ENCODE measurements at regions of chr2 and their contacts with region 1.

Region 1: GRCh38 chr2:138948070-138948539 is 167.9 kb upstream of the NXPH2 start:
- DNase-seq: peak; percentile 99
- ATAC-seq: peak; percentile 73
- H3K4me3 ChIP-seq: no peak overlapping the region
- H3K27ac ChIP-seq: peak overlapping the region; percentile 97
- H3K4me1 ChIP-seq: peaks cover 44% of the 10 kb centered on the region
- H3K27me3 ChIP-seq: no peaks in the 10 kb centered on the region
- CTCF ChIP-seq: no peak

Region 2: GRCh38 chr2:138964418-138964817 is 16.3 kb after region 1 on chr2:
- CTCF ChIA-PET with region 1: no interaction called
- POLR2A ChIA-PET with region 1: interaction called, 5 read pairs
- intact Hi-C with region 1: loop called (anchors 1 kb)
- DNase-seq: peak; percentile 94
- ATAC-seq: peak; percentile 93
- H3K4me3 ChIP-seq: no peak overlapping the region
- H3K27ac ChIP-seq: peak overlapping the region; percentile 94
- H3K4me1 ChIP-seq: peaks cover 21% of the 10 kb centered on the region
- H3K27me3 ChIP-seq: no peaks in the 10 kb centered on the region
- CTCF ChIP-seq: no peak

Region 3: DNA sequence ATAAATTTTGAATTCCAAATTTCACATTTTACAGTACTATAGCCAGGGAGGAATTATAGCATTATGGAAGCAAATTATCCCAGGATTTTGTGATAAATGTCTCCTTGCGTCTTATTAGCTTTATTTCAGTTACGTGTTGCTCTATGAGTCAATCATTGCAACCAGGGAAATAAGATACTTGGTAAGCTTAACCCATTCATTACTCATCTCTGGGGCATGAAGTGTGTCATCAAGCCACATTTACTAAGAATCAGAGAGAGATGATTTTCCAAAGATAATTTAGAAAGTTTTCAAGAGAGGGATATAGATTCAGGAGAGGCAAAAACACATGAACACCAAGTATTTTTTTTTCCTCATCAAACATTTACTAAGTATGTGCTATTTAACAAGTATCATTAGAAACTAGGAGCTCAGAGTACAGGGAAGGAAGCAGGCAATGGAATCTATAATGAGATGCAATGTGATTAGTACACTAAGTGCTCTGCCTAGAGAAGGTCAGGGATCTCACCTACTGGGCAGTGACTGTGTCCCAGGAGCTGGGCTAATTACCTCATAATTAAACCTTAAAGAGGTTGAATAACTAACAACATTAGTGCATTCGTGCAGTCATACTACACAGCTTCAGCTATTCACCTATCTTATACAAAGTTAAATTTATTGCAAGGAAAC is 49.9 kb after region 1 on chr2:
- CTCF ChIA-PET with region 1: no interaction called
- POLR2A ChIA-PET with region 1: no interaction called
- intact Hi-C with region 1: loop called (anchors 1 kb)
- DNase-seq: peak; percentile 90
- ATAC-seq: peak; percentile 89
- H3K4me3 ChIP-seq: peak overlapping the region; percentile 26; the same call in 1 of the 2 replicates
- H3K27ac ChIP-seq: peak overlapping the region; percentile 78
- H3K4me1 ChIP-seq: peaks cover 38% of the 10 kb centered on the region
- H3K27me3 ChIP-seq: no peaks in the 10 kb centered on the region
- CTCF ChIP-seq: no peak

Region 4: DNA sequence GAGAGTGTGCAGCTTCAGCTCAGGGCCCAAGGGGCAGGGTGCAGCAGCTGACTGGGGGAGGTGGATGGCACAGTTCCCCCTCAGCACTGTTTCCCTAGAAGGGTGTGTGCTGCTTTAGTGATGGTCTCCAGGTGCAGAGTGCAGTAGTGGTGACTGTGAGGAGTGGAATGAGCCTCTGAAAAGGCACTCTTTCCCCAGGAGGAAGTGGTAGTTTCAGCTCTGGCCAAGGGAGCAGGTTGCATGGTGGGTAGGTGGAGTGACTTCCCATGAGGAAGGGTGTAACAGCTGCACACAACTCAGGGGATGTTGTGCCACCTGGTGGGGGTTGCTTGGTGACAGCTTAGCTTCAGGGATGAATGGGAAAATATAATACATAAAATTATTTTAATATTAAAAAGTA is 83.6 kb after region 1 on chr2:
- CTCF ChIA-PET with region 1: no interaction called
- POLR2A ChIA-PET with region 1: no interaction called
- intact Hi-C with region 1: loop called (anchors 1 kb)
- DNase-seq: peak; percentile 78
- ATAC-seq: peak; percentile 86
- H3K4me3 ChIP-seq: no peak overlapping the region
- H3K27ac ChIP-seq: peak overlapping the region; percentile 52
- H3K4me1 ChIP-seq: peaks cover 26% of the 10 kb centered on the region
- H3K27me3 ChIP-seq: no peaks in the 10 kb centered on the region
- CTCF ChIP-seq: peak; percentile 57

Region 5: DNA sequence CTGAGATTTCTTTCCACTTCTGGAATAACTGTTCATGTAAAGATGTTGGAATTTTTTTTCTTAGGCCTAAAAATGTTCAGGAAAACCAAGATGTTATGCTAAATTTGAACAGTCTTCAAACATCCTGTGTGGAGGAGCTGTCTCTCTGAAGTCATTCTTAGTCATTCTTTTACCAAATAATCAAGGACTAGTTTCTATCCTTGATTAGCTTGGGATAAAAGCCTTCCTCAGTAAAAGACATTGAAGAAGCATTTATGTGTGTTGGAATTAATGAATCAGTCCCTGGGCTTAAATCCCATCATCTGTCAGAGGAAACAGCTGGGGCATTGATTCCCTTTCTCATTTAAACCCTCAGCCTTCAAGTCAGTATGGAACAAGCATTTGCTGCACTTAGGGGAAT is 132.1 kb after region 1 on chr2:
- CTCF ChIA-PET with region 1: interaction called, 3 read pairs
- POLR2A ChIA-PET with region 1: no interaction called
- intact Hi-C with region 1: loop called (anchors 5 kb)
- DNase-seq: peak; percentile 66
- ATAC-seq: peak; percentile 94
- H3K4me3 ChIP-seq: no peak overlapping the region
- H3K27ac ChIP-seq: peak overlapping the region; percentile 58
- H3K4me1 ChIP-seq: peaks cover 19% of the 10 kb centered on the region
- H3K27me3 ChIP-seq: no peaks in the 10 kb centered on the region
- CTCF ChIP-seq: no peak

Region 6: DNA sequence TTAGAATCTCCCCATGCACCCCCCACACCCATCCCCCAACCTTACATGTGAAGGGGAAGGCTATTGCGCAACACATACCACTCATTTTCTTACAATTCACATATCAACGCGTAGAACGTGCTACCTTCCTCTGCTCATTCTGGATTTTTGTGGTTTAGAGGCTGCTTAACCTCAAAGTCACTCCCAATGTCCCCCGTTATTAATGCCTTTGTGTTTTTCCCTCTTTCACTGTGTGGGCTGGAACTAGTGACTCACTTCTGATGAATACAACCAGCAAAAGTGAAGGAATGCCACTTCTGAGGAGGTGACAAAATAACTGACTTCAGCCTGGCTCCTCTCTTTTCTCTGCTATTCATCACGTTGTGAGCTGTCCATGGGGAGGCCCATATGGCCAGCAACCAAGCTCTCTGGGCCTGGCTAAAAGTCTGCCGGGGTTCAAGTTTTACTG is 174.6 kb after region 1 on chr2:
- CTCF ChIA-PET with region 1: no interaction called
- POLR2A ChIA-PET with region 1: no interaction called
- intact Hi-C with region 1: loop called (anchors 2 kb)
- DNase-seq: peak; percentile 96
- ATAC-seq: peak; percentile 80
- H3K4me3 ChIP-seq: 0 out of 2 replicates have a peak overlapping the region, but pooled peaks have one; percentile 5
- H3K27ac ChIP-seq: peak overlapping the region; percentile 88
- H3K4me1 ChIP-seq: peaks cover 28% of the 10 kb centered on the region
- H3K27me3 ChIP-seq: no peaks in the 10 kb centered on the region
- CTCF ChIP-seq: no peak

Measured in PC-3 (cell line).